Caco-2 (cell line): ENCODE measurements at regions of chr6 and their contacts with region 1.

Region 1: GRCh38 chr6:22828179-22829062 is 259.1 kb downstream of the HDGFL1 start:
- DNase-seq: peak; percentile 62 to 65
- H3K4me3 ChIP-seq: no peak overlapping the region
- H3K4me3 Mint-ChIP-seq: peak overlapping the region; percentile 70
- H3K27ac Mint-ChIP-seq: peak overlapping the region; percentile 89
- H3K4me1 ChIP-seq: peaks cover 32% of the 10 kb centered on the region
- H3K4me1 Mint-ChIP-seq: peaks cover 43% of the 10 kb centered on the region
- H3K27me3 ChIP-seq: no peaks in the 10 kb centered on the region
- H3K27me3 Mint-ChIP-seq: no peaks in the 10 kb centered on the region
- CTCF ChIP-seq: peak; percentile 64 to 67

Region 2: GRCh38 chr6:21946298-21946783 is 882.1 kb before region 1 on chr6:
- CTCF ChIA-PET with region 1: no interaction called
- POLR2A ChIA-PET with region 1: no interaction called
- intact Hi-C with region 1: loop called (anchors 5 kb)
- DNase-seq: no peak
- H3K4me3 ChIP-seq: no peak overlapping the region
- H3K4me3 Mint-ChIP-seq: no peak overlapping the region
- H3K27ac Mint-ChIP-seq: peak overlapping the region; percentile 87
- H3K4me1 ChIP-seq: peaks cover 45% of the 10 kb centered on the region
- H3K4me1 Mint-ChIP-seq: peaks cover 28% of the 10 kb centered on the region
- H3K27me3 ChIP-seq: no peaks in the 10 kb centered on the region
- H3K27me3 Mint-ChIP-seq: no peaks in the 10 kb centered on the region
- CTCF ChIP-seq: no peak

Region 3: GRCh38 chr6:22248513-22249308 is 579.7 kb before region 1 on chr6:
- CTCF ChIA-PET with region 1: no interaction called
- POLR2A ChIA-PET with region 1: no interaction called
- intact Hi-C with region 1: loop called (anchors 5 kb)
- DNase-seq: peak; percentile 48 to 65
- H3K4me3 ChIP-seq: no peak overlapping the region
- H3K4me3 Mint-ChIP-seq: no peak overlapping the region
- H3K27ac Mint-ChIP-seq: peak overlapping the region; percentile 77
- H3K4me1 ChIP-seq: peaks cover 46% of the 10 kb centered on the region
- H3K4me1 Mint-ChIP-seq: peaks cover 31% of the 10 kb centered on the region
- H3K27me3 ChIP-seq: no peaks in the 10 kb centered on the region
- H3K27me3 Mint-ChIP-seq: no peaks in the 10 kb centered on the region
- CTCF ChIP-seq: no peak

Region 4: DNA sequence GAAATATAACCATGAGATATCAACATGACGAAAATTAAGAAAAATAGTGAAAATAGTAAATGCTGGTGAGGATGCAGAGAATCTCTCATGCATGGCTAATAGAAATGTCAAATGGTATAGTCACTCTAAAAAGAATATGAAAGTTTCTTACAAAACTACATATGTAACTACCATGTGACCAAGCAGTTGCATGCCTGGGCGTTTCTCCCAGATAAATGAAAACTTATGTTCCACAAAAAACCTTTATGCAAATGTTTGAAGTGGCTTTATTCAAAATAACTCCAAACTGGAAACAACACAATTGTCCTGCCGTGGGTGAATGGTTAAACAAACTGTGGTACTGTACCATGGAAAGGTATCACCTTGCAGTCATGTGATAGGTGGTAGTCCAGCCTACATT is 146.7 kb before region 1 on chr6:
- CTCF ChIA-PET with region 1: no interaction called
- POLR2A ChIA-PET with region 1: no interaction called
- intact Hi-C with region 1: no loop called
- DNase-seq: no peak
- H3K4me3 ChIP-seq: no peak overlapping the region
- H3K4me3 Mint-ChIP-seq: no peak overlapping the region
- H3K27ac Mint-ChIP-seq: no peak overlapping the region
- H3K4me1 ChIP-seq: no peaks in the 10 kb centered on the region
- H3K4me1 Mint-ChIP-seq: no peaks in the 10 kb centered on the region
- H3K27me3 ChIP-seq: no peaks in the 10 kb centered on the region
- H3K27me3 Mint-ChIP-seq: no peaks in the 10 kb centered on the region
- CTCF ChIP-seq: no peak

Region 5: DNA sequence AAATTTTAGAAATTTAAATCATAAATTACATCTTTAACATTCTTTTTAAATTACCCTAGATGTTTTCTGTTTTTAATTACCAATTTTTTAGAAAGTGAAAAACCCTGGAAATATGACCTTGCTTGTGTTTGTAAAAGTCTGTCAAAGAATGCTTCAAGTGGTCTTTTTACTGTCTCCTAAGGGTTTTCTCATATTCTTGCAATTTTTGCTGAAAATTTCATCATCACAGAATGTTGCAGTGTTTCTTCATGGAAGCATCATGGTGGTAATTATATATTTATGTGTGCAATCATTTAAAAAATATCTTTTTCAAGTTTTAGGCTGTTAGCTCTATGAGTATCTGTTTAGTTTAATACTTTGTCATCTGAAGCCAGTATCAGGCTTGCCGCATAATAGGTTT is 80.8 kb before region 1 on chr6:
- CTCF ChIA-PET with region 1: no interaction called
- POLR2A ChIA-PET with region 1: no interaction called
- intact Hi-C with region 1: loop called (anchors 1 kb)
- DNase-seq: no peak
- H3K4me3 ChIP-seq: no peak overlapping the region
- H3K4me3 Mint-ChIP-seq: no peak overlapping the region
- H3K27ac Mint-ChIP-seq: no peak overlapping the region
- H3K4me1 ChIP-seq: peaks cover 15% of the 10 kb centered on the region
- H3K4me1 Mint-ChIP-seq: peaks cover 18% of the 10 kb centered on the region
- H3K27me3 ChIP-seq: no peaks in the 10 kb centered on the region
- H3K27me3 Mint-ChIP-seq: no peaks in the 10 kb centered on the region
- CTCF ChIP-seq: no peak

Region 6: DNA sequence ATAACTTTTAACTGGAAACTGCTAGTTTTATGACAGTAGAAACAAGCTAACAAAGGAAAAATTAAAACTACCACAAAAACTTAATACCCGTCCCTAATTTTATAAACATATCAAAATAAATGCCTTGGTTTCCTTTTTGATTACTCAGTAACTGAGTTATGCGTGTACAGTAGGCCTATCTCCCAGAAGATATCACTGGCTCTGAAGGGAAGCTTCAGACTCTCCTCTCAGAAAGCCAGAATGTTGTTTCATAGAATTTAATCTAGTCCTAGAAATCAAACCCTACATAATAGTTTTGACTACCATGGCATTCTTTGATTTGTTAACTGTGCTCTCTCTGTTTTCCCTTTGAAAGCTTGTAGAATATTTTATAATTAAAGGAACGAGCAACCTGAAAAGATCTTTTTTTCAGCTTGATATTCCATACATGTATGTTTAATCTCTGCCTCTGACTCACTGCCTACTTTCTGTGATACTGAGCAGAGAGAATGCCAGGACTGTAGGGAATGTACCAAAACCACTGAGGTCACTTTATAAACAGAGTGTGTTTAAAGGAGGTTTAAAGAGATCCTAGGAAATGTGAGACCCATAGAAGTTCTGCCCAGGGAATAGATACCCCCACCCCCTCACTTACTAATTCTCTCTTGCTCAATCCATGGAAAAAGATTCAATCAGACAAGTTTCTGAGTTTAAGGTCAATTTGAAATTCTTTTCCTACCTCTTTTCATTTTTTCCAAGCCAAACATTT is 52.4 kb after region 1 on chr6:
- CTCF ChIA-PET with region 1: no interaction called
- POLR2A ChIA-PET with region 1: no interaction called
- intact Hi-C with region 1: loop called (anchors 1 kb)
- DNase-seq: peak; percentile 49 to 68
- H3K4me3 ChIP-seq: no peak overlapping the region
- H3K4me3 Mint-ChIP-seq: peak overlapping the region; percentile 67
- H3K27ac Mint-ChIP-seq: peak overlapping the region; percentile 77
- H3K4me1 ChIP-seq: peaks cover 59% of the 10 kb centered on the region
- H3K4me1 Mint-ChIP-seq: peaks cover 46% of the 10 kb centered on the region
- H3K27me3 ChIP-seq: no peaks in the 10 kb centered on the region
- H3K27me3 Mint-ChIP-seq: no peaks in the 10 kb centered on the region
- CTCF ChIP-seq: no peak

Region 7: DNA sequence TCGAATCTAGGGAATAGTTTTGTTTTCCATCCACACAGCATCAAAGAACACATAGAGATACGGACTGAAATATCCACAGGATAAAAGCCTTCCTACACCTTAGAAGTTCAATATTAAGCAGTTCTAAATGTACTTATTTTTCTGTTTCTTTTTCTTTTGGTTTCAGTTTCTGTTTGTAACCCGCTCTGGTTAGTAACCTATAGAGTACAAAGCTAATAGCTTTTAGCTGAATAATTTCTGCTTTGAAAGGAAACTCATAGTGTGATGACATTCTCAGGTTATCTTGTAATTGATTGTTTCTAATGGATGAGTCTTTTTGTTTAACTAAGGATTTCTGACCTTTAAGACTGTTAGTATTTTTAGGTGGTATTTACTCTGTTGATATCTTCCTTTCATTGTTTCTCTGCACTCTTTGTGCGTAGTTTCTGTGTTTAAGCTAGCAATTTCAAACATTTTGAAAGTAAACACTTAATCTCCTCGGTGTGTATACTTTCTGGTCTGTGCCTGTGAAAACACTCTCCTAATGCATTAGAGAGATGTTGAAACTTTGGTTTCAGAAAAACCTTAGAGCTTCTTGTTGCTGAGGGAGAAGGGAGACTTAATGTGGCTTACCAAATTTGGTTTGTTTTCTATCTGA is 126.4 kb after region 1 on chr6:
- CTCF ChIA-PET with region 1: no interaction called
- POLR2A ChIA-PET with region 1: no interaction called
- intact Hi-C with region 1: loop called (anchors 5 kb)
- DNase-seq: peak in 1 of 2 experiments; percentile 51
- H3K4me3 ChIP-seq: 0 out of 2 replicates have a peak overlapping the region, but pooled peaks have one; percentile 13
- H3K4me3 Mint-ChIP-seq: peak overlapping the region; percentile 70
- H3K27ac Mint-ChIP-seq: peak overlapping the region; percentile 93
- H3K4me1 ChIP-seq: peaks cover 48% of the 10 kb centered on the region
- H3K4me1 Mint-ChIP-seq: peaks cover 34% of the 10 kb centered on the region
- H3K27me3 ChIP-seq: no peaks in the 10 kb centered on the region
- H3K27me3 Mint-ChIP-seq: no peaks in the 10 kb centered on the region
- CTCF ChIP-seq: no peak

Region 8: DNA sequence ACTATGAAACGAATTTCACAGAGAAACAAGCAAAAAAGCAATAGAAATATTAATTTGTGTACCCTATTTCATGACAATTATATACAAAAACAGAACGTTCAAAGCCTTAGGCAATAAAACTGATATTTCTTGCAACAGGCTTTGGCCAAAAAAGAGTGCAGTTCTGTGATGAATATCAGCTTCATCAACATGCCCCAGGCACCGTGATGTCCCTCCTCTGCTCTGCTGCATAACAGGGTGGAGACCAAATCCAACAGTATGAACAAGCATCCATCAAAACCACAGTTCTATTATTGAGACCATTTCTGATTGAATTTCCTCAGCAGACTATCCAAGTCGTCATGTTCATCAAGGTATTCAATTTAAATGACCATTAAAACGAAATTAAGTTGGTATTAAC is 575.0 kb after region 1 on chr6:
- CTCF ChIA-PET with region 1: no interaction called
- POLR2A ChIA-PET with region 1: no interaction called
- intact Hi-C with region 1: no loop called
- DNase-seq: no peak
- H3K4me3 ChIP-seq: no peak overlapping the region
- H3K4me3 Mint-ChIP-seq: no peak overlapping the region
- H3K27ac Mint-ChIP-seq: no peak overlapping the region
- H3K4me1 ChIP-seq: no peaks in the 10 kb centered on the region
- H3K4me1 Mint-ChIP-seq: no peaks in the 10 kb centered on the region
- H3K27me3 ChIP-seq: no peaks in the 10 kb centered on the region
- H3K27me3 Mint-ChIP-seq: peaks cover 3% of the 10 kb centered on the region
- CTCF ChIP-seq: no peak

Region 9: DNA sequence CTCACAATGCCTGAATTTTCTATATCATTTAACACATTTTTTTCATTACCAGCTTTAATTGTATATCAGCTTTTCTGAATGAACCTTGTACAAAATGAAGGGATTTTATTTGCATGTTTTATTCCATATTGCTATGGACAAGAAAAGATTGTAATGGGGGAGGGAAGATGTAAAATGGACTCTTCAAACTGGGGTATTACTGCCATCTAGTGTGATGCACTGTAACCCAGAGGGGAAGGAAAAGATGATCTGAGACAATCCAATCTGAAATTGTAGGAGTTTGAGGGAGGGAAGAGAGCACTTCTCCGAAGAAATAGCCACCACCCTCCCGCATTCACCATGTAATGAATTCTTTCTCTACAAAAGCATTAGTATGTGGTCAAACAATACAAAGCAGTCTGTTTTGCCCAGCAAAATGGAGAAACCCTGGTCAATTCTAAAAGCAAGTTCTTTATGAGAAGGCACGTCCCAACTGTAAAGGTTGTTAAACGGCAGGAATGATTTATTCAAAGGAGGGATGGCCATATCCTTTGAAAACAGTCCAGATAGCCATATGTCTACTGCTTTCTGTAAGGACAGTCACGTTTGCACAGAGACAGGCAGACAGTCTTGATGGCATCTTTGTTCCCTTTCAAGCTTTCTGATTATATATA is 618.1 kb after region 1 on chr6:
- CTCF ChIA-PET with region 1: no interaction called
- POLR2A ChIA-PET with region 1: no interaction called
- intact Hi-C with region 1: loop called (anchors 5 kb)
- DNase-seq: peak in 1 of 2 experiments; percentile 25
- H3K4me3 ChIP-seq: no peak overlapping the region
- H3K4me3 Mint-ChIP-seq: no peak overlapping the region
- H3K27ac Mint-ChIP-seq: no peak overlapping the region
- H3K4me1 ChIP-seq: no peaks in the 10 kb centered on the region
- H3K4me1 Mint-ChIP-seq: no peaks in the 10 kb centered on the region
- H3K27me3 ChIP-seq: no peaks in the 10 kb centered on the region
- H3K27me3 Mint-ChIP-seq: no peaks in the 10 kb centered on the region
- CTCF ChIP-seq: peak; percentile 31 to 47